ENCODE measurements at regions of chr18 and their contacts with region 1.

Region 1: GRCh38 chr18:31685097-31686082 is 1.0 kb upstream of the B4GALT6 start:
- DNase-seq: peak; percentile 21 to 57 (median 31)
- H3K4me3 ChIP-seq: peak overlapping the region in 1 of 2 donors; percentile 39
- H3K4me3 Mint-ChIP-seq: peak overlapping the region; percentile 81 to 91 (median 86)
- H3K27ac ChIP-seq: no peak overlapping the region
- H3K27ac Mint-ChIP-seq: peak overlapping the region in 3 of 7 donors; percentile 30 to 77 (median 68)
- H3K4me1 ChIP-seq: no peaks in the 10 kb centered on the region
- H3K4me1 Mint-ChIP-seq: peaks cover 3 to 18% (median 11%) of the 10 kb centered on the region in 4 donors
- H3K27me3 ChIP-seq: peaks cover 5% of the 10 kb centered on the region
- H3K27me3 Mint-ChIP-seq: peaks cover 16 to 17% of the 10 kb centered on the region in 2 donors

Region 2: DNA sequence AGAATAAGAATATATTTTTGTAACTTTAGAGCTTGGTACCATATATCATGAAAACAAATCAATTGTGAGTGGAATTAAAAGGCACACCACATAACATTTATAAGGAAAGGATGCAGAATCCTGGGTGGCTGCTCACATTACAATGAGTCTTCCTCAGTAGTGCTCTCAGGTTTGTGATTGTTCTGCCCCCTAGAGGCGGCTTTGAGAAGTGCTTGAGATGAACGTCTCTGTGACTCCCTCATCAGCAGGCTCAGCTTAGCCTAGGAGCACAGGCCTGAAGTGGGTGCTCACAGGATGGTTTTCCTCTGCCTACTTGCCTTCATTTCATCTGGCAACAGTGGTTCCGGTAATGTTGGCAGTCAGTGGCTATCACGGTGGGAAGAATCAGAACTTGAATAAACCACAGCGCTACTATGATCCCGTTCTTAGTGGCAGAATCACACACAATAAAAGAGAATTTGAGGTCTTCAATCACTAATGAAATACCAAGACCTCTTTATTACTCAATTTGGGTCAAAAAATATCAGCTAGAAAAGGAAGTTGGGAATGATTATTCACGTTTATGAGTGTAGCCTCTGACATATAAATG is 37.1 kb after region 1 on chr18:
- CTCF ChIA-PET with region 1: interaction called, 7 read pairs
- POLR2A ChIA-PET with region 1: no interaction called
- intact Hi-C with region 1: loop called (anchors 5 kb)
- DNase-seq: peak; percentile 43 to 61 (median 53)
- H3K4me3 ChIP-seq: no peak overlapping the region
- H3K4me3 Mint-ChIP-seq: no peak overlapping the region
- H3K27ac ChIP-seq: no peak overlapping the region
- H3K27ac Mint-ChIP-seq: no peak overlapping the region
- H3K4me1 ChIP-seq: no peaks in the 10 kb centered on the region
- H3K4me1 Mint-ChIP-seq: peaks cover 0 to 5% (median 0%) of the 10 kb centered on the region in 4 donors
- H3K27me3 ChIP-seq: peaks cover 10% of the 10 kb centered on the region
- H3K27me3 Mint-ChIP-seq: peaks cover 19 to 20% of the 10 kb centered on the region in 2 donors